ENCODE measurements at regions of chr7 and their contacts with region 1.

Region 1: DNA sequence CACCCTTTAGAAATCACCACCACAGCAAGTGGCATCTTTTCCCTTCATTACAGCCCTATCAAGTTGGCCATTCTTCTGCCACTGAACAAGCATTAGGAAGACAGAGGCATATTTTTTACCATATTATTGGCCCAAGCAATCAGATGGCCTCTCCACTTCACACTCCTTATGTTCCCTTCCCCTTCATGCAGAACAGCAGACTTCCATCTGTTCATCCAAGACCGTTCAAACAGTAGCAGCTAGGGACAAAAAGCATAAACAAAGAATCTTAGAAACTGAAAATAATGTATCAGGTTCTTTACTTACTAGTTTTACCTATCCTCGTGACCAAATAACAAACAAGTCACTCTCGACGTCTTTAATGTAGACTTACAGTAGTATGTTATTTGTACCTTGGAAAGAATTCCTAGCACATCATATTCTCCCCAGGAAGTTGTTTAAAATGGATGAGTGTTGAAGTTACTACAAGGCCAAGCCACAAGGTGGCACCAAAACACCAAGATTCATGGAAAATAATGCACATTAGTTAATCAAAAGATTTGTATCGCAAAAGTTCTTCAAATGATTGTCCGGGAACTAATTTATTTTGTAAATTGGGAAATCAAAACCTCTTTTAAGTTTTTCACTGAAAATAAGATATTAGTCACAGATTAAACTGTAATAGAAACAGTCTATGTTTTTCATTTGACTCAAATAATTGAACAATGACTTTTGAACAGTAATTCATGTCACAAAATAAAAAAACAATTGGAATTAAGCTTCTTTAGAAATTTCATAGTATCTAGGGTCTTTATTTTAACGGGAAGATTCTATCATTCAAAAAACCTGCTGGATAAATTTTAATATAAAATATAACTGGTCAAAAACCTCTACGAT is 112.1 kb downstream of the VPS41 start:
- DNase-seq: peak; percentile 67
- ATAC-seq: peak; percentile 85
- H3K4me3 ChIP-seq: no peak overlapping the region
- H3K27ac ChIP-seq: no peak overlapping the region
- H3K4me1 ChIP-seq: no peaks in the 10 kb centered on the region; the same call in 1 of the 2 replicates
- H3K27me3 ChIP-seq: no peaks in the 10 kb centered on the region
- CTCF ChIP-seq: peak; percentile 80
- POLR2A ChIP-seq: 0 out of 2 replicates have a peak, but pooled peaks have one; percentile 20
- RAD21 ChIP-seq: peak; percentile 88

Region 2: DNA sequence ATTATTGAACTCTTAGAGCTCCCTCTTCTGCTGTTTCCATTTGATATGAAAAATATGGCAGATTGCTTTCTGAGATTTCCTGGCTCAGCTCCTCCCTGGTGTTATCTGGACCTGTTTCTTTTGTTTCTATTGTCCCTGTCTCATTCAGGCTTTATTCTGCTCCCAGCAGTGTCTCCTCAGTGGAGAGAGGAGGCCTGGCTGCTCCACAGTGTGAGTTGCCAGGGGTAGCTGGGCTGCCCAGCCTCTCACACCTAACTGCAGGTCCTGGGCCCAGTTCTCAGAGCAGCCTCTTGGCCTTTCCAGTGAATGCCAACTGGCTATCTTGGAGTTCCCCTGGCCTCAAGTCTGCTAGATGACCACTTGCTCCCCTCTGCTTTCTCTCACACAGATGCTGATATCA is 14.9 kb before region 1 on chr7:
- CTCF ChIA-PET with region 1: no interaction called
- POLR2A ChIA-PET with region 1: no interaction called
- dilution Hi-C with region 1: no loop called
- in situ Hi-C with region 1: no loop called
- intact Hi-C with region 1: no loop called
- DNase-seq: no peak
- ATAC-seq: no peak
- H3K4me3 ChIP-seq: no peak overlapping the region
- H3K27ac ChIP-seq: no peak overlapping the region
- H3K4me1 ChIP-seq: no peaks in the 10 kb centered on the region
- H3K27me3 ChIP-seq: no peaks in the 10 kb centered on the region
- CTCF ChIP-seq: no peak
- POLR2A ChIP-seq: no peak
- RAD21 ChIP-seq: no peak

Region 3: DNA sequence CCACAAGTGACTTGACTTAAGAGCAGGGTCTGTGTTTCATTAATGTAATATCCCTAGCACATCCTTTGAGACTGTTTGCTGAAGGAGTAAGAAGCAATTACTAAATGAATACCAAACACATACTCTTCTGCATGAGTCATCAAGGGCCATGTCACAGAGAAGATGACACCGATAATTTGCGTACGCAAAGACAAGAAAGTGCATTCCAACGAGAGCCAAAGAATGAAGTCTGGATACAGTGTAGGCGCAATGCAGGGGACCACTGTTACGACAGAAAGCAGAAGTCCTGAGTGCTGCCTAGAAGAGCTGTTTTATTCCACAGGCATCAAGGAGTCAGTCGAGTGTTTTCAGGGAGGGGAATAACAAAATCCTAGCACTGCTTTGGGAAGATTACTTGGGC is 49.4 kb after region 1 on chr7:
- CTCF ChIA-PET with region 1: no interaction called
- POLR2A ChIA-PET with region 1: no interaction called
- dilution Hi-C with region 1: no loop called
- in situ Hi-C with region 1: no loop called
- intact Hi-C with region 1: no loop called
- DNase-seq: peak; percentile 78
- ATAC-seq: peak; percentile 80
- H3K4me3 ChIP-seq: no peak overlapping the region
- H3K27ac ChIP-seq: peak overlapping the region; percentile 10; the same call in 1 of the 2 replicates
- H3K4me1 ChIP-seq: peaks cover 5% of the 10 kb centered on the region
- H3K27me3 ChIP-seq: no peaks in the 10 kb centered on the region
- CTCF ChIP-seq: no peak
- POLR2A ChIP-seq: no peak
- RAD21 ChIP-seq: no peak

Region 4: DNA sequence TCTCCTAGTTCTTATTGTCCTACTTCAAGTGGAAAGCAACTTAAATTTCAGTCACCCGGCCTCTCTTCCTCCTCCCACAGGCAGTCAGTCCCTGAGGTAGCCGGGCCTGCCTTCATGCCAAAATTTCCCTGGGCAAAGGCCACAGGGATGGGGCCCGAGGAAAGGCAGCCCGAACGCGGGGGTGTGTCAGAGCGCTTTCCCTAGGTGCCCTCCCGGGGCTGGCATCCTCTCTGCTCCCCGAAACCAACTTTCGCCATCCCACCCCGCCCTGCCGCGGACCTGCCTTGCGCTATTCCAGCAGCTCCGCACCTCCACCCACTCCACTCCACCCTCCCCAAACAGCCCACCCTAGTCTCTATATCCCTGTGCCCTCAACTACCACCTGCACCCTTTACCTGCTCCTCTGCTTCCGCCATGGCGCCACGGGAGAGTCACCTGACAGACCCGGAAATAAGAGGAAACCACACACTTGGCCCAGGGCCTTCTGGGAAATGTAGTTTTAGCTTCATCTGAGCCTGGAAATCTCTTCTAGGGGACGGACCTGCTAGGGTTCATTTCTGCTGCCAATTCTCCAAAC is 112.0 kb after region 1 on chr7 and contains the start of gene VPS41:
- CTCF ChIA-PET with region 1: no interaction called
- POLR2A ChIA-PET with region 1: no interaction called
- dilution Hi-C with region 1: no loop called
- in situ Hi-C with region 1: no loop called
- intact Hi-C with region 1: loop called (anchors 5 kb)
- DNase-seq: peak; percentile 69
- ATAC-seq: peak; percentile 93
- H3K4me3 ChIP-seq: peak within 1 kb of the TSS; percentile 60
- H3K27ac ChIP-seq: no peak within 1 kb of the TSS
- H3K4me1 ChIP-seq: no peaks in the 10 kb centered on the region
- H3K27me3 ChIP-seq: peaks cover 2% of the 10 kb centered on the region; the same call in 1 of the 2 replicates
- CTCF ChIP-seq: no peak
- POLR2A ChIP-seq: no peak
- RAD21 ChIP-seq: no peak
- total RNA-seq, gene VPS41: 28.0 and 51.9 TPM in 2 replicates

Region 5: GRCh38 chr7:38932509-38933168 is 135.8 kb after region 1 on chr7:
- CTCF ChIA-PET with region 1: no interaction called
- POLR2A ChIA-PET with region 1: no interaction called
- dilution Hi-C with region 1: no loop called
- in situ Hi-C with region 1: no loop called
- intact Hi-C with region 1: loop called (anchors 5 kb)
- DNase-seq: peak; percentile 25
- ATAC-seq: peak; percentile 53; the same call in 1 of the 2 replicates
- H3K4me3 ChIP-seq: no peak overlapping the region
- H3K27ac ChIP-seq: no peak overlapping the region
- H3K4me1 ChIP-seq: no peaks in the 10 kb centered on the region
- H3K27me3 ChIP-seq: no peaks in the 10 kb centered on the region; the same call in 1 of the 2 replicates
- CTCF ChIP-seq: peak; percentile 74
- POLR2A ChIP-seq: no peak
- RAD21 ChIP-seq: peak; percentile 55

Region 6: DNA sequence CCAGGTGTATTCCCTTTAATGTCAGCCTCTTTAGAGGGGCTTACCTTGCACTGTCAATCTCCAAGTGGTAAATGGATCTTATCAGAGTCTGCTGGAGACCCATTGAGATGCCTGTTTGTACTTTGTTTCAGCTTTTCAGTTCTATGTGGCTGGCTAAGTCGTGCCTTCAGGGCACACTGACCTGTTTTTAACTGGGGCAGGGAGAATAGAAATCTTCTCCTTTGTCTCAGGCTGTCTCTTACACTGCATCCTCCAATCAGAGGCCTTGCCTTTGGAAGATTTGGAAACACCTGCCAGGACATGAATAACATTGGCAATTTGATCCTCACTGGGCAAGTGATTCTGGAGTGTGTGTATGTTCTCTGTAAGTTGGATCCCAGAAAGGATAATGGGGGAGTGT is 245.8 kb after region 1 on chr7:
- CTCF ChIA-PET with region 1: no interaction called
- POLR2A ChIA-PET with region 1: no interaction called
- dilution Hi-C with region 1: no loop called
- in situ Hi-C with region 1: no loop called
- intact Hi-C with region 1: loop called (anchors 10 kb)
- DNase-seq: no peak
- ATAC-seq: no peak
- H3K4me3 ChIP-seq: no peak overlapping the region
- H3K27ac ChIP-seq: no peak overlapping the region
- H3K4me1 ChIP-seq: no peaks in the 10 kb centered on the region
- H3K27me3 ChIP-seq: no peaks in the 10 kb centered on the region; the same call in 1 of the 2 replicates
- CTCF ChIP-seq: no peak
- POLR2A ChIP-seq: no peak
- RAD21 ChIP-seq: no peak

Region 7: DNA sequence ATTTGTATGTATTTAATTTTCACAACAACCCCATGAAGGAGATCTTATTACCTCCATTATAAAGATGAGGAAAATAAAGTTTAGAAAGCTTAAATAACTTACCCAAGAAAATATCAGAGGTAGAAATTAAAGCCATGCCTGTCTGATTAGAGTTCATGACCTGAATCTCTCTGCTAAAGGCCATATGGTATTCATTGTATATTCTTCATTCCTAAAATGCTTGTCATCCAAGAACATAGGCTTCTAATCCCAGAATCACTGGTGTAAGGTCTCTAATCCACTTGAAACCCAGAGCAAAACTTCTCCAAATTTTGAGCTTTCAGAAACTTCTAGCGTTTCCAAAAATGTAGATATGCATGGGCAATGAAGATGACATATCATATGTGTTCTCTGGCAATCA is 697.1 kb after region 1 on chr7:
- CTCF ChIA-PET with region 1: no interaction called
- POLR2A ChIA-PET with region 1: no interaction called
- dilution Hi-C with region 1: no loop called
- in situ Hi-C with region 1: no loop called
- intact Hi-C with region 1: no loop called
- DNase-seq: no peak
- ATAC-seq: no peak
- H3K4me3 ChIP-seq: no peak overlapping the region
- H3K27ac ChIP-seq: no peak overlapping the region
- H3K4me1 ChIP-seq: no peaks in the 10 kb centered on the region
- H3K27me3 ChIP-seq: peaks cover 6% of the 10 kb centered on the region
- CTCF ChIP-seq: no peak
- POLR2A ChIP-seq: no peak
- RAD21 ChIP-seq: no peak

Region 8: DNA sequence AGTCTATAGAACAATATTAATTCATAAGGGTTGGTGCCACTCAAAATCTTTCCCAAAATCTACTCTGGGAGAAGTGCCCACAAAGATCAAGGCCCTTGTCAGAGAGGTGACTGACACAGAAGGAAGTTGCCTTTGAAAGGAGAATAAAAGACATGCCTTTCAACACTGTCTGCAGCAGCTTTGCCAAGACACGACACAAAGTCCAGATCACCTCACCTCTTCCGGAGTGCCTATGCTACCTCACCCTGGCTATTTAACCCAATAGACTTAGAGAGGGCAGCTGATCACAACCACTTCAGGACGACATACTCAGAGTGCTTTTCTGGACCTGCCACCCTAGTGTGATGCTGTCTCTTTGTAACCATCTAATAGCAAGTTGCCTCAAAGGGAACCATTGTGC is 720.4 kb after region 1 on chr7:
- CTCF ChIA-PET with region 1: no interaction called
- POLR2A ChIA-PET with region 1: no interaction called
- dilution Hi-C with region 1: no loop called
- in situ Hi-C with region 1: no loop called
- intact Hi-C with region 1: loop called (anchors 1 kb)
- DNase-seq: no peak
- ATAC-seq: no peak
- H3K4me3 ChIP-seq: no peak overlapping the region
- H3K27ac ChIP-seq: no peak overlapping the region
- H3K4me1 ChIP-seq: no peaks in the 10 kb centered on the region
- H3K27me3 ChIP-seq: peaks cover 20% of the 10 kb centered on the region
- CTCF ChIP-seq: no peak
- POLR2A ChIP-seq: no peak
- RAD21 ChIP-seq: no peak